ENCODE measurements at regions of chr4 and their contacts with region 1.

Region 1: DNA sequence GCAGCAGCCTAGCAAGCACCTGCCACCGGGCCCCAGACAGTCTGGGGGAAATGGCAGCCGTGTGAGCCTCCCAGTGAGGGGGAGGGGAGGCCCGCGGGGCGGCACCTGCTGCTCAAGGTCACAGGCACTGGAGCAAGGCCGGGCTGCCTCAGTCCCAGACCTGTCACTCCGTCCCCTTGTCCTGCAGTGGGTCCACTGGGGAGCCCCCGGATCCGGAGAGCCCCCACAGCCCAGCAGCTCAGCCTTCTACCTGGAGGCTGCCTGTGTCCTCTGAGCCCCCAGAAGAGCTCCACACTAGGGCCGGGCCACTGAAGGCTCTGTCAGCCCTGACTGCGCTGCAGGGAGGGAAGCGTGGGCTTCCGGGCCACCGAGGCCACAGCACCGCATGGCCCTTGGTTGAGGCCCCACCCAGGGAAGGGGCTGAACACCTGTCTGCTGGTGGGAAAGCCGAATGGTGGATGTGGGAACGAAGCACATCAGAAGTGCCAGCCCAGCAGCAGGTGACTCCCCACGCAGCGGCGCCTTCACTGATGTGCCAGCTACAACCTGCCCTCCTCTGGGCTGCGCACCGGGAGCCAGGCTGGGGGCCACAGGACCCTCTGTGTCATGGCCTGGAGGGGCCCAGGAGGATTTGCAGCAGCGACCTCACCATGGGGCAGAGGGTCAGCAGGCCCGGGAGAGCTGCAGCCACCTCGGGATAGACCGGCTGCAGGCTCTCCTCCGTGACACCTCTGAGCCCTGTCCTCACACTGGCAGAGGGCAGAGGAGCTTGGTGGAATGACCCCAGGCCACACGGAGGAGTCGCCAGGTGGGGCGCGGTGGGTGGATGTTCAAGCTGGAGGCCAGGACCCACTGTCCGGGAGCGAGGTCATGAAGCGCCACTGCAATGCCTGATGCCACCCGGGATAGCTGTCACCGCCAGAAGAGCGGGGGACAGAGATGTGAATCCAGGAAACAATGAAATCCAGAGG is 35.0 kb upstream of the MXD4 start:
- DNase-seq: peak in 8 of 35 experiments; percentile 18 to 42 (median 30)
- ATAC-seq: peak; percentile 42 to 75 (median 56)
- H3K4me3 ChIP-seq: no peak overlapping the region
- H3K4me3 Mint-ChIP-seq: peak overlapping the region in 1 of 3 donors; percentile 72
- H3K27ac ChIP-seq: no peak overlapping the region
- H3K27ac Mint-ChIP-seq: peak overlapping the region; percentile 66 to 84
- H3K4me1 ChIP-seq: peaks cover 14 to 46% of the 10 kb centered on the region in 2 experiments
- H3K4me1 Mint-ChIP-seq: peaks cover 43 to 59% (median 48%) of the 10 kb centered on the region in 3 donors
- H3K27me3 ChIP-seq: no peaks in the 10 kb centered on the region
- H3K27me3 Mint-ChIP-seq: no peaks in the 10 kb centered on the region

Region 2: GRCh38 chr4:2318476-2318875 is 21.6 kb after region 1 on chr4:
- CTCF ChIA-PET with region 1: no interaction called
- POLR2A ChIA-PET with region 1: interaction called in 1 of 2 experiments, 11 read pairs
- DNase-seq: peak in 1 of 35 experiments; percentile 4
- ATAC-seq: no peak
- H3K4me3 ChIP-seq: no peak overlapping the region
- H3K4me3 Mint-ChIP-seq: no peak overlapping the region
- H3K27ac ChIP-seq: no peak overlapping the region
- H3K27ac Mint-ChIP-seq: no peak overlapping the region
- H3K4me1 ChIP-seq: peaks cover 0 to 19% of the 10 kb centered on the region in 2 experiments
- H3K4me1 Mint-ChIP-seq: peaks cover 3 to 10% (median 6%) of the 10 kb centered on the region in 3 donors
- H3K27me3 ChIP-seq: no peaks in the 10 kb centered on the region
- H3K27me3 Mint-ChIP-seq: no peaks in the 10 kb centered on the region

Region 3: DNA sequence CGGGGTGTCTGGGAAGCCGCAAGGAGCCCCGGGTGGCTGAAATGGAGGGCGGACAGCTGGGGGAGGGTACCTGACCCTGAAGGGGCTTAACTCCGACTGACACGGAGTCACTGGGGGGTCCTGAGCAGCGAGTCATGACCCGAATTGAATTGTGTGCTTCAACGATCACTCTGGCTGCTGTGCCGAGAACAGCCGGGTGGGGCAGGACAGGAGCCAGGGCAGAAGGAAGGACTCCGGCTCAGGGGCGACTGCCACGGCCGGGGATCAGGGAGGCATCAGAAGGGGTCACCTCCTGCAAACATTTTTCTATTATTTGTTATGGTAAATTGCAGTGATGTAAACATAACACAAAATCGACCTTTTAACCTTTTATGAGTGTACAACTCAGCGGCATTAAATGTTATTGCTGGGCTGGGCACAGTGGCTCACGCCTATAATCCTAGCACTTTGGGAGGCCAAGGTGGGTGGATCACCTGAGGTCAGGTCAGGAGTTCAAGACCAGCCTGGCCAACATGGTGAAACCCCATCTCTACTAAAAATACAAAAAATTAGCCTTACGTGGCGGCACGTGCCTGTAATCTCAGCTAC is 100.0 kb after region 1 on chr4:
- CTCF ChIA-PET with region 1: no interaction called
- POLR2A ChIA-PET with region 1: interaction called in 1 of 2 experiments, 16 read pairs
- DNase-seq: no peak
- ATAC-seq: no peak
- H3K4me3 ChIP-seq: no peak overlapping the region
- H3K4me3 Mint-ChIP-seq: no peak overlapping the region
- H3K27ac ChIP-seq: no peak overlapping the region
- H3K27ac Mint-ChIP-seq: no peak overlapping the region
- H3K4me1 ChIP-seq: peaks cover 0 to 36% of the 10 kb centered on the region in 2 experiments
- H3K4me1 Mint-ChIP-seq: peaks cover 35 to 57% (median 36%) of the 10 kb centered on the region in 3 donors
- H3K27me3 ChIP-seq: peaks cover 5 to 10% of the 10 kb centered on the region in 2 experiments
- H3K27me3 Mint-ChIP-seq: peaks cover 0 to 3% of the 10 kb centered on the region in 2 donors

Region 4: DNA sequence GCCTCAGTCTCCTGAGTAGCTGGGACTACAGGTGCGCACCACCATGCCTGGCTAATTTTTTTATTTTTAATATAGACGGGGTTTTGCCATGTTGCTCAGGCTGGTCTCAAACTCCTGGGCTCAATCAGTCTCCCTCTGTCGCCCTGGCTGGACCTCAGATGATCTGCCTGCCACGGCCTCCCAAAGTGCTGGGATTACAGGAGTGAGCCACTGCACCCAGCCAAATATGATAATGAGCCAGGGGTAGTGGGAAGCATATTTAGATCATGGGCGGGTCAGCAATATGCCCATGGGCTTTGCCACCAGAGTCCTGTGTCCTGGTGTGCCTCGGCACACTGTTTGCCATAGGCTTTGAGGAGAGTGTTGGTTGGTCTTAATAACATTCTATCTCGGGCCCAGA is 311.4 kb after region 1 on chr4:
- CTCF ChIA-PET with region 1: no interaction called
- POLR2A ChIA-PET with region 1: no interaction called
- DNase-seq: no peak
- ATAC-seq: no peak
- H3K4me3 ChIP-seq: no peak overlapping the region
- H3K4me3 Mint-ChIP-seq: no peak overlapping the region
- H3K27ac ChIP-seq: no peak overlapping the region
- H3K27ac Mint-ChIP-seq: no peak overlapping the region
- H3K4me1 ChIP-seq: no peaks in the 10 kb centered on the region
- H3K4me1 Mint-ChIP-seq: peaks cover 37 to 57% (median 49%) of the 10 kb centered on the region in 3 donors
- H3K27me3 ChIP-seq: no peaks in the 10 kb centered on the region
- H3K27me3 Mint-ChIP-seq: no peaks in the 10 kb centered on the region

Measured in T-cell (primary cell).